ENCODE measurements at regions of chr17 and their contacts with region 1.

Region 1: DNA sequence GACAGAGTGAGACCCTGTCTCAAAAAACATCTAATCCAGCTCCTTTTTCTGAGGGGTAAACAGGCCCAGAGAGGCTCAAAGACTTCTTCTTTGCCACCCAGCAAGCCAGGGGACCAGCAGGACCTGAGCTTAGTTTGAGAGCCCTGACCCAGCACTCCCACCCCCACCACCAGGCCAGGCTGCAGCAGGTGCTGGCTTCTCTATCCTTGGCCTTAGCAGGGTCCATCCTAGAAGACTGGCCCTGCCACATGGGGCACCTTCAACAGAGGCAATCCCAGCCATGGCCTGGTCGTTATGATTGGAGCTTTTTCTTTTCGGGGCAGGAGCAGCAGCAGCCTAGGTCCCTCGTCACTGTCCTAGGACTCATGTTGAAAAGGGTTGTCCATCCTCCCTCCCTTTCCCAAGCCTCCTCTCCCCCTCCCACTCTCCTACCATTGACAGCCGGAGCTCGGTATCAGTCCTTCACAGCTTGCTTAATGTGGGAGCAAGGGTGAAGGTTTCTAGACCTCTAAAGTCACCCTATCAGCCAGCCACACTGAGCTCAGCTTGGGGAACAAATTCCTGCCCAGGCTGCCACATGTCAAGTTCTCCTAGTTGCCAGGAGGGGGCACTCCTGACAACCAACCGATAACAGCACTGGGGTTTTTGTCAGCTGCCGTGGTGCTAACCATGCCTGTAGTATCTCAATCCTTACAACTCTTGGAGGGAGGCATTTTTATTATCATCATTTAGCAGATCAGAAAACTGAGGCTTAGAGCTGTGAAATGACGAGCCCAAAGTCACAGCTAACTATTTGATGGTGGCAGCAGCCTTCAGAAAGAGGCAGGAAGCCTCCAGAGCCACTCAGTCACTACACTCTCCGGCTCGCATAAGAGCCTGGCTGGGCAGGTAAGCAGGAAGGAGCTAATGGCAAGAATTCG is 11.2 kb downstream of the MRPL27 start:
- DNase-seq: peak; percentile 55 to 69 (median 62)
- H3K4me3 ChIP-seq: no peak overlapping the region
- H3K4me3 Mint-ChIP-seq: peak overlapping the region in 7 of 8 donors; percentile 2 to 77 (median 57)
- H3K27ac ChIP-seq: peak overlapping the region; percentile 9
- H3K27ac Mint-ChIP-seq: peak overlapping the region; percentile 73 to 91 (median 87)
- H3K4me1 ChIP-seq: peaks cover 7% of the 10 kb centered on the region
- H3K4me1 Mint-ChIP-seq: peaks cover 8 to 10% (median 9%) of the 10 kb centered on the region in 4 donors
- H3K27me3 ChIP-seq: no peaks in the 10 kb centered on the region
- H3K27me3 Mint-ChIP-seq: no peaks in the 10 kb centered on the region

Region 2: DNA sequence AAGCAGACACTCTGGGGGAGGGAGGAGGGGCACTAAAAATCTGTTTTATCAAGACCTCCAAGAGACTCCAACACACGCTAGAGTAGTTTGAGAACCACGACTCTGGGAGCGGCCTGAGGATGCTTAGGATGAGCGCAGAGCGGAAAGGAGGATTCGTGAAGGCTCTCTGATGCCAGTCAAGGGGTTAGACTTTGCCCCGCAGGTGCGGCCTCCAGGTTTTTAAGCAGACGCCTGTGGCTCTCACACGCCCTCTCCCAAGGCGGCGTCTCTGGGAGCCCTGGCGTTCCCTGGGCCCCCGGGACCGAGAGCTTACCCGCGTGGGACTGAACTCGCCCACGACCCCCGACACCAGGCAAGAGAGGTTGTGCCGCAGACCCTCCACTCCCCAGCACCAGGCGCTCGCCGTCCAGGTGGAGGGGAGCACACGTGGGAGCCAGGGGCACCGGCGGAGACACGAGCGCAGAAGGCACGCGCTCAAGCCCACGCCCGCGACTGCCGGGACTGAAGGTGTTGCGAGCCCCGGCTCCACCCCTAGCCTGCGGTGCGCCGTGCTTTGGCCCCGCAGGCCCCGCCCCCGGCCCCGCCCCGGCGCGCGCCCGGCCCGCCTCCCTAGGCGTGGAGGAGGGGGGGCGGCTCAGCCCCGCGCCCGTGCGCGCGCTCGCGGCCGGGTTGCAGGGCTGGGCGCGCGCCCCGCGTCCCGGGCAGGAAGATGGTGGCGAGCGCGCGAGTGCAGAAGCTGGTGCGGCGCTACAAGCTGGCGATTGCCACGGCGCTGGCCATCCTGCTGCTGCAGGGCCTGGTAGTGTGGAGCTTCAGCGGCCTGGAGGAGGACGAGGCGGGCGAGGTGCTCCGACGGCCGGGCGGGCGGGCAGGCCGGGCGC is 16.1 kb before region 1 on chr17 and contains the start of gene XYLT2:
- CTCF ChIA-PET with region 1: interaction called, 35 read pairs
- POLR2A ChIA-PET with region 1: interaction called, 25 read pairs
- intact Hi-C with region 1: no loop called
- DNase-seq: peak; percentile 86 to 94 (median 93)
- H3K4me3 ChIP-seq: peak within 1 kb of the TSS; percentile 65 to 80
- H3K4me3 Mint-ChIP-seq: peak within 1 kb of the TSS; percentile 88 to 94 (median 91)
- H3K27ac ChIP-seq: peak within 1 kb of the TSS; percentile 72
- H3K27ac Mint-ChIP-seq: peak within 1 kb of the TSS; percentile 88 to 96 (median 92)
- H3K4me1 ChIP-seq: peaks cover 31% of the 10 kb centered on the region
- H3K4me1 Mint-ChIP-seq: peaks cover 15 to 55% (median 33%) of the 10 kb centered on the region in 4 donors
- H3K27me3 ChIP-seq: no peaks in the 10 kb centered on the region
- H3K27me3 Mint-ChIP-seq: no peaks in the 10 kb centered on the region
- total RNA-seq, gene XYLT2: 37.6 to 41.1 TPM

Region 3: GRCh38 chr17:50372758-50373556 is 11.1 kb after region 1 on chr17 and contains the starts of genes EME1 and MRPL27:
- CTCF ChIA-PET with region 1: interaction called, 38 read pairs
- POLR2A ChIA-PET with region 1: interaction called, 16 read pairs
- intact Hi-C with region 1: loop called (anchors 1 kb)
- DNase-seq: peak; percentile 90 to 94 (median 90)
- H3K4me3 ChIP-seq: peak within 1 kb of the TSS; percentile 96 to 100
- H3K4me3 Mint-ChIP-seq: peak within 1 kb of the TSS; percentile 99 to 100 (median 100)
- H3K27ac ChIP-seq: peak within 1 kb of the TSS; percentile 98
- H3K27ac Mint-ChIP-seq: peak within 1 kb of the TSS; percentile 95 to 100 (median 100)
- H3K4me1 ChIP-seq: peaks cover 16% of the 10 kb centered on the region
- H3K4me1 Mint-ChIP-seq: peaks cover 15 to 29% (median 20%) of the 10 kb centered on the region in 4 donors
- H3K27me3 ChIP-seq: no peaks in the 10 kb centered on the region
- H3K27me3 Mint-ChIP-seq: no peaks in the 10 kb centered on the region
- total RNA-seq, gene EME1: 0.41 to 0.89 TPM
- total RNA-seq, gene MRPL27: 30.0 to 32.9 TPM

Region 4: GRCh38 chr17:50380369-50381259 is 18.8 kb after region 1 on chr17:
- CTCF ChIA-PET with region 1: interaction called, 38 read pairs
- POLR2A ChIA-PET with region 1: interaction called, 3 read pairs
- intact Hi-C with region 1: no loop called
- DNase-seq: no peak
- H3K4me3 ChIP-seq: no peak overlapping the region
- H3K4me3 Mint-ChIP-seq: no peak overlapping the region
- H3K27ac ChIP-seq: no peak overlapping the region
- H3K27ac Mint-ChIP-seq: peak overlapping the region in 2 of 7 donors; percentile 48 to 55
- H3K4me1 ChIP-seq: no peaks in the 10 kb centered on the region
- H3K4me1 Mint-ChIP-seq: peaks cover 0 to 1% (median 0%) of the 10 kb centered on the region in 4 donors
- H3K27me3 ChIP-seq: no peaks in the 10 kb centered on the region
- H3K27me3 Mint-ChIP-seq: no peaks in the 10 kb centered on the region

Region 5: GRCh38 chr17:50389534-50389933 is 27.7 kb after region 1 on chr17:
- CTCF ChIA-PET with region 1: interaction called, 11 read pairs
- POLR2A ChIA-PET with region 1: interaction called, 3 read pairs
- intact Hi-C with region 1: no loop called
- DNase-seq: no peak
- H3K4me3 ChIP-seq: no peak overlapping the region
- H3K4me3 Mint-ChIP-seq: no peak overlapping the region
- H3K27ac ChIP-seq: no peak overlapping the region
- H3K27ac Mint-ChIP-seq: no peak overlapping the region
- H3K4me1 ChIP-seq: no peaks in the 10 kb centered on the region
- H3K4me1 Mint-ChIP-seq: peaks cover 8 to 15% (median 9%) of the 10 kb centered on the region in 4 donors
- H3K27me3 ChIP-seq: no peaks in the 10 kb centered on the region
- H3K27me3 Mint-ChIP-seq: no peaks in the 10 kb centered on the region

Region 6: DNA sequence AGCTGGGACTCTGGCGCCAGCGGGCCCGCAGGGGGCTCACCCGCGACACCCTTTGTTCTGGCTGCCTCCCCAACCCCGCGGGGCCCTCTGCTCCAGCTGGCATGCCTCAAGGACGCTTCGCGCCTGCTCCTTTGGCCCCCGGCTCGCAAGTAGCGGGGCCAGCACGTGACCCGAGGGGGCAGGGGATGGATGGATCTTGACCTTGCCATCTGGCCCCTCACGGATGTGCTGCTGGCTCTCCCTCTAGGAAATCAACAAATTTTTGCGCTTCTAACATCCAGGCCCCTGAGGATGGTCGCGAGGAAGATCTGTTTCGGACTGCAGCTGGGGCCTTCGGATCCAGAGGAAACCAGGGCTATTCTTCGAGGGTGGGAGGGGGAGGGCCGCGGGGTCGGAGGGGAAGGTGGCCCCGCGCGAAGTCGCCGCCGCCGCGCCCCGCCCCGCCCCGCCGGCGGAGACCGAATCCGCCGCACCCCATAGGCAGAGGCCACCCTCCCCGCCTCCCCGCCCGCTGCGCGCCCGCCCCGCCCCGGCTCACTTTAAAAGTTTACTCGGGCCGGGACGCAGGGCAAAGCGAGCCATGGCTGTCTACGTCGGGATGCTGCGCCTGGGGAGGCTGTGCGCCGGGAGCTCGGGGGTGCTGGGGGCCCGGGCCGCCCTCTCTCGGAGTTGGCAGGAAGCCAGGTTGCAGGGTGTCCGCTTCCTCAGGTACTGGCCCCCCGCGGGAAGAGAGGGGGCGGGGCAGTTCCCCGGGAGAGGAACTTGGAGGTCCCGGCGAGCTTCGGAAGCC is 64.1 kb after region 1 on chr17 and contains the start of gene ACSF2:
- CTCF ChIA-PET with region 1: interaction called, 14 read pairs
- POLR2A ChIA-PET with region 1: interaction called, 3 read pairs
- intact Hi-C with region 1: no loop called
- DNase-seq: peak; percentile 51 to 74 (median 63)
- H3K4me3 ChIP-seq: peak within 1 kb of the TSS; percentile 17 to 69
- H3K4me3 Mint-ChIP-seq: peak within 1 kb of the TSS; percentile 77 to 93 (median 88)
- H3K27ac ChIP-seq: peak within 1 kb of the TSS; percentile 62
- H3K27ac Mint-ChIP-seq: peak within 1 kb of the TSS; percentile 72 to 93 (median 89)
- H3K4me1 ChIP-seq: peaks cover 32% of the 10 kb centered on the region
- H3K4me1 Mint-ChIP-seq: peaks cover 19 to 45% (median 32%) of the 10 kb centered on the region in 4 donors
- H3K27me3 ChIP-seq: no peaks in the 10 kb centered on the region
- H3K27me3 Mint-ChIP-seq: no peaks in the 10 kb centered on the region
- total RNA-seq, gene ACSF2: 20.8 to 24.8 TPM

Region 7: DNA sequence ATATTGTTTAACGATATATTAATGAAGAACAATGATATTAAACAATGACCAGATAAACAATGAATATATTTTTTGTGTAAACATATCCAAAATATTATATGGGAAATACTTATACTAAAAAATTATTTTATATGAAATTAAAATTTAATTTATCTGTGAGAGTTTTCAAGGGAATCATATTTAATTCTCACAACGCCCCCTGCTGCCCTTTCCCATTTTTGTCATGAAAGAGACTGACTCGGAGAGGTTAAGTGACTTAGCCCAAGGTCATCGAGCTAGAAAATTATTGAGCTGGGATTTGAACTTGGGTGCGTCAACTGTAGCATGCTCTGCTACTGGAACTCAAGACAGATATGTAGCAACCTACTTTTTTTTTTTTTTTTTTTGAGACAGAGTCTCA is 139.2 kb after region 1 on chr17:
- CTCF ChIA-PET with region 1: interaction called, 19 read pairs
- POLR2A ChIA-PET with region 1: no interaction called
- intact Hi-C with region 1: loop called (anchors 1 kb)
- DNase-seq: no peak
- H3K4me3 ChIP-seq: no peak overlapping the region
- H3K4me3 Mint-ChIP-seq: no peak overlapping the region
- H3K27ac ChIP-seq: no peak overlapping the region
- H3K27ac Mint-ChIP-seq: no peak overlapping the region
- H3K4me1 ChIP-seq: no peaks in the 10 kb centered on the region
- H3K4me1 Mint-ChIP-seq: peaks cover 0 to 8% (median 3%) of the 10 kb centered on the region in 4 donors
- H3K27me3 ChIP-seq: no peaks in the 10 kb centered on the region
- H3K27me3 Mint-ChIP-seq: no peaks in the 10 kb centered on the region

Measured in CD4-positive, alpha-beta memory T cell (primary cell).